ENCODE measurements at regions of chr3 and their contacts with region 1.

Region 1: GRCh38 chr3:137709011-137709601 is 55.0 kb upstream of the SOX14 start:
- DNase-seq: peak; percentile 8
- H3K4me3 ChIP-seq: no peak overlapping the region
- H3K27ac ChIP-seq: no peak overlapping the region
- H3K4me1 ChIP-seq: no peaks in the 10 kb centered on the region
- CTCF ChIP-seq: peak; percentile 74

Region 2: GRCh38 chr3:137542049-137542448 is 167.1 kb before region 1 on chr3:
- CTCF ChIA-PET with region 1: no interaction called
- POLR2A ChIA-PET with region 1: no interaction called
- intact Hi-C with region 1: no loop called
- DNase-seq: no peak
- H3K4me3 ChIP-seq: no peak overlapping the region
- H3K27ac ChIP-seq: no peak overlapping the region
- H3K4me1 ChIP-seq: no peaks in the 10 kb centered on the region
- CTCF ChIP-seq: no peak

Region 3: GRCh38 chr3:137692803-137693431 is 16.2 kb before region 1 on chr3:
- CTCF ChIA-PET with region 1: no interaction called
- POLR2A ChIA-PET with region 1: no interaction called
- intact Hi-C with region 1: no loop called
- DNase-seq: peak; percentile 3
- H3K4me3 ChIP-seq: no peak overlapping the region
- H3K27ac ChIP-seq: no peak overlapping the region
- H3K4me1 ChIP-seq: no peaks in the 10 kb centered on the region
- CTCF ChIP-seq: peak; percentile 70

Region 4: DNA sequence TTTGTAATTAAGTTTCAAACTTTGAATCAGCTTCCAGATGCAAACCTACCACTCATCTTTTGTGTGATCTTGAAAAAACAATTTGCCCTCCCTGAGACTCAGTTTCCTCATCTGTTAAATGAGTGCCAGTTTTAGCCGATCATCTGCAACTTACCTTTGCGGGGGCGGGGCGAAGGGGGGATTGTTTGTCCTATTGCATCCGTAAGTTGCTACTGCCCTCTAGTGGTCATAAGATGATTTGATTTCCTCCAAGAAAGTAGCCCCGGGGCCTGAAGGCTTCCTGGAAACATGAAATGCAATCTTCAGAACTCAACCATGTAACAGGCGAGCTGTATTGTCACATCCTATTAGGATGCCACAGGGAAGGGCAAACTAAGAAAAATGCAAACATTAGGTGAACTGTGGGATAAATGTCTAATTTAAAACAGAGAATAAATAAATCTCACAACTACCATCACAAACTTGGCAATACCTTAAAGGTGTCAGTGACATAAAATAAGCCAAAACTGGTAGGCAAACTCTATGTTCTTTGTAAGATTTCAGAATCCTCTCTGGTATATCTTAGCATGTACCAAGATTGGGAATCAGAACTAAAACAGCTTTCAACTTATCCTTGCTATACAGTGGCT is 237.4 kb after region 1 on chr3:
- CTCF ChIA-PET with region 1: no interaction called
- POLR2A ChIA-PET with region 1: no interaction called
- intact Hi-C with region 1: loop called (anchors 1 kb)
- DNase-seq: peak; percentile 80
- H3K4me3 ChIP-seq: no peak overlapping the region
- H3K27ac ChIP-seq: no peak overlapping the region
- H3K4me1 ChIP-seq: no peaks in the 10 kb centered on the region
- CTCF ChIP-seq: peak; percentile 94